Cardiac septum (tissue), 1 donor: ENCODE measurements at regions of chr17 and their contacts with region 1.

Region 1: GRCh38 chr17:54907376-54907775 is 6.7 kb downstream of the TOM1L1 start:
- DNase-seq: no peak

Region 2: GRCh38 chr17:54785643-54786268 is 121.6 kb before region 1 on chr17:
- intact Hi-C with region 1: no loop called
- DNase-seq: no peak

Region 3: GRCh38 chr17:54937018-54937417 is 29.6 kb after region 1 on chr17:
- intact Hi-C with region 1: loop called (anchors 2 kb)
- DNase-seq: no peak